Activated CD8-positive, alpha-beta T cell treated with anti-CD3 and anti-CD28 coated beads for 36 hours (primary cell): ENCODE measurements at regions of chr16 and their contacts with region 1.

Region 1: GRCh38 chr16:11255737-11256660 is at the start of gene SOCS1:
- DNase-seq: peak; percentile 87
- ATAC-seq: peak; percentile 65
- H3K4me3 Mint-ChIP-seq: peak within 1 kb of the TSS; percentile 97
- H3K27ac Mint-ChIP-seq: peak within 1 kb of the TSS; percentile 94
- H3K4me1 Mint-ChIP-seq: peaks cover 41% of the 10 kb centered on the region
- H3K27me3 Mint-ChIP-seq: no peaks in the 10 kb centered on the region
- CTCF ChIP-seq: peak; percentile 84
- total RNA-seq, gene SOCS1: 75.7 to 75.8 TPM

Region 2: GRCh38 chr16:10954903-10955302 is 301.1 kb before region 1 on chr16:
- CTCF ChIA-PET with region 1: interaction called, 6 read pairs
- POLR2A ChIA-PET with region 1: interaction called, 20 read pairs
- intact Hi-C with region 1: no loop called
- DNase-seq: no peak
- ATAC-seq: no peak
- H3K4me3 Mint-ChIP-seq: no peak overlapping the region
- H3K27ac Mint-ChIP-seq: peak overlapping the region; percentile 16
- H3K4me1 Mint-ChIP-seq: peaks cover 38% of the 10 kb centered on the region
- H3K27me3 Mint-ChIP-seq: no peaks in the 10 kb centered on the region
- CTCF ChIP-seq: no peak

Region 3: DNA sequence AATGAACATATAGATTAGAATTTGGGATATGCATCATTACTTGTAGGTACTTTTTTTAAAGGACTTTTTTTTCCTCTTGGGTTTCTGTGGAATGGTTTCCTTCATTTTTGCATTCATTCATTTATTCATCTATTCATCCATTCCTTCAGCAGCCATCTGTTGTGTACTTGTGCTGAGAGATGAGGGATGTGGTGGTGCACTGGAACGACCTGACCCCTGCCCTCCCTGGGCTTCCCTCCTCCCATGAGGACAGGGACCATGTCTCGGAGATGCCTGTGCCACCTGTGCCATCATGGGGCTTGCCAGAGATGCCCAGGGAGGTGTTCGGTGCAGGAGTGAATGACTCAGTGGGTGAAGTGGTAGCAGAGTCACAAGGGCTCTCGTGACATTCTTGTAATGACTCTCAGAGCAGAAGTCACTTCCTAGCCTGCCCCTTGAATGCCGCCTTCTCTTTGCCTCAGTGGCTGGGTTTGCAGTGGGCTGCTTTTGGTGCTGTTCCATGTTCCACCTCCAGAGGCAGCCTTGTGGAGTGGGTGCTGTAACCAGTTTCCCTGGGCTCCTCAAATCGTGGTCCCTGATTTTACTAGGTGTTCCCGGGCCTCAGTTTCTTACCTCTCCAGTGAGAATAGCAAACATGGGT is 267.7 kb before region 1 on chr16:
- CTCF ChIA-PET with region 1: interaction called, 10 read pairs
- POLR2A ChIA-PET with region 1: interaction called, 13 read pairs
- intact Hi-C with region 1: no loop called
- DNase-seq: peak; percentile 90
- ATAC-seq: peak; percentile 93
- H3K4me3 Mint-ChIP-seq: peak overlapping the region; percentile 21
- H3K27ac Mint-ChIP-seq: peak overlapping the region; percentile 86
- H3K4me1 Mint-ChIP-seq: peaks cover 64% of the 10 kb centered on the region
- H3K27me3 Mint-ChIP-seq: no peaks in the 10 kb centered on the region
- CTCF ChIP-seq: peak; percentile 72

Region 4: DNA sequence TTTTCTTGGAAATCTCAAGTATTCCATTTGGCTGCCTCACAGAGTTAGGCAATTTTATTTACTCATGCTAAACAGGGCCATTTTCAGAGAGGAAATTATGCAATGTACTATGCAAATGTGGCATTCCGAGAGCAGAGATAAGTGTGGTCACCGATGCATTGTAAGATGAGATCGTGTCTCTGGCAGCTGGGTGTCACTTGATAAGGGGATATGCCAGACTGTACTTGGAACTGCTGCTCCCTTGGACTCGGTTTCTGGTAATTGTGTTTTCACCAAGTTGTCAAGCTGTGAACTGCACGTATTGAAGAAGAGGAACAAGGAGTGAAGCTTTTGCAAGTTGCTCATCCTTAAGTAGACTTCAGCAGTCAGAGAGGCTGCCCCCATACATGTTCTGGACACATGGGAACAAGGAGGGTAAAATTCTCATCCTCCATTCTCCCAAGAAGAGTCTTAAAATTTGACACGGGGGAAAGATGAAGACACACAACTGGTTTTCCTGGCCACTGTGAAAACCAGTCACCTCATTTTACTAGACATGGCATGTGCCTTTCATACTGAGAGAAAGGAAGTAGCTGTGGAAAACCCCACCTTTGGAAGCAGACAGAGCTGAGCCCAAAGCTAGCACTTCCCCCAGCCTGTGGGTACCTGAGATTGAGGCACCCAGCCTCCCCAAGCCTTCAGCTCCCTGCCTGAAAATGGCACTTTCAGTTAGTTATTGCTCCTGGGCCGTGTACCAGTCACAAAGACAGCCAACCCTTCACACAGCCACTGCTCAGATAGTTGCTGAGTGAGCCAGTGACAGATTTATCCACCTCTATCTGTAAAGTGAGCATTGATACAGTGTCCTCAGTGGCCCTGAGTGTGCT is 150.7 kb before region 1 on chr16:
- CTCF ChIA-PET with region 1: interaction called, 9 read pairs
- POLR2A ChIA-PET with region 1: interaction called, 147 read pairs
- intact Hi-C with region 1: no loop called
- DNase-seq: peak; percentile 61
- ATAC-seq: peak; percentile 66
- H3K4me3 Mint-ChIP-seq: peak overlapping the region; percentile 11
- H3K27ac Mint-ChIP-seq: peak overlapping the region; percentile 89
- H3K4me1 Mint-ChIP-seq: peaks cover 61% of the 10 kb centered on the region
- H3K27me3 Mint-ChIP-seq: no peaks in the 10 kb centered on the region
- CTCF ChIP-seq: no peak

Region 5: GRCh38 chr16:11224096-11224893 is 31.7 kb before region 1 on chr16:
- CTCF ChIA-PET with region 1: interaction called, 21 read pairs
- POLR2A ChIA-PET with region 1: interaction called, 146 read pairs
- intact Hi-C with region 1: no loop called
- DNase-seq: peak; percentile 91
- ATAC-seq: peak; percentile 65
- H3K4me3 Mint-ChIP-seq: peak overlapping the region; percentile 63
- H3K27ac Mint-ChIP-seq: peak overlapping the region; percentile 98
- H3K4me1 Mint-ChIP-seq: peaks cover 55% of the 10 kb centered on the region
- H3K27me3 Mint-ChIP-seq: no peaks in the 10 kb centered on the region
- CTCF ChIP-seq: no peak

Region 6: DNA sequence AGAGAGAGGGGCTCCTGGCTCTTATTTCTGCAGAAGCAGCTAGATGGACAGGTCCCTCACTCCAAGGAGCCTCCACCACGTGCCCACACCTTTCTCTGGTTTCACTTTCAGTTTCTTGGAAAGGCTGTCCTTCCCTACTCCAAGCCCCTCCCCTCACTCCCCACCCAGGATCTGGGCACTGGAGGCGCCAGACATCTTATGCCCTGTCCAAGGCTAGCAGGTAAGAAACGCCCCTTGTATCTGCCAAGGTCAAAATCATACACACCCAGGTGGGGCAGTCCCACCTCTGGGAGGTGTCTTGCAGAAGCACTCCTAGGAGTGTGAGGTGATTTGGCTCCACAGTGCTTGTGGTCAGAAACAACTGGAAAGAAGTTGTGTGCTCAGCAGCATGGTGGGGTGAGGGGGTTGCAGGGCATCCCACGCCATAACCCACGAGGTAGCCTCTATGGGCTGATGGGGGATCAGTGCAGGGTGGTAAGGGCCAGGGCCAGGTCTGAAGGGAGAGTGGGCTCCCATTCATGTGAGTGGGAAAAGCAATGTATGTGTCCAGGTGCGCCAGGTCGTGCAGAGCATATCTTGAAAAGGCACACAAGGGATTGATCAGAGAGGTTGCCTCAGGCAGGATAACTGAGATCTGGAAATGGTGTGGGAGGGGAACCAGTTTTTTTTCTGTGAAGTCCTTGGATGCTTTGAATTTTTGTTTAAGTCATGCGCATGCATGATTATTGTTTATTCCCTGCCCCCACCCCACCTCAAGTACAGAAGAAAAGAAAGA is 56.9 kb after region 1 on chr16:
- CTCF ChIA-PET with region 1: no interaction called
- POLR2A ChIA-PET with region 1: interaction called, 19 read pairs
- intact Hi-C with region 1: no loop called
- DNase-seq: peak; percentile 31
- ATAC-seq: peak; percentile 22
- H3K4me3 Mint-ChIP-seq: no peak overlapping the region
- H3K27ac Mint-ChIP-seq: no peak overlapping the region
- H3K4me1 Mint-ChIP-seq: peaks cover 44% of the 10 kb centered on the region
- H3K27me3 Mint-ChIP-seq: no peaks in the 10 kb centered on the region
- CTCF ChIP-seq: no peak

Region 7: DNA sequence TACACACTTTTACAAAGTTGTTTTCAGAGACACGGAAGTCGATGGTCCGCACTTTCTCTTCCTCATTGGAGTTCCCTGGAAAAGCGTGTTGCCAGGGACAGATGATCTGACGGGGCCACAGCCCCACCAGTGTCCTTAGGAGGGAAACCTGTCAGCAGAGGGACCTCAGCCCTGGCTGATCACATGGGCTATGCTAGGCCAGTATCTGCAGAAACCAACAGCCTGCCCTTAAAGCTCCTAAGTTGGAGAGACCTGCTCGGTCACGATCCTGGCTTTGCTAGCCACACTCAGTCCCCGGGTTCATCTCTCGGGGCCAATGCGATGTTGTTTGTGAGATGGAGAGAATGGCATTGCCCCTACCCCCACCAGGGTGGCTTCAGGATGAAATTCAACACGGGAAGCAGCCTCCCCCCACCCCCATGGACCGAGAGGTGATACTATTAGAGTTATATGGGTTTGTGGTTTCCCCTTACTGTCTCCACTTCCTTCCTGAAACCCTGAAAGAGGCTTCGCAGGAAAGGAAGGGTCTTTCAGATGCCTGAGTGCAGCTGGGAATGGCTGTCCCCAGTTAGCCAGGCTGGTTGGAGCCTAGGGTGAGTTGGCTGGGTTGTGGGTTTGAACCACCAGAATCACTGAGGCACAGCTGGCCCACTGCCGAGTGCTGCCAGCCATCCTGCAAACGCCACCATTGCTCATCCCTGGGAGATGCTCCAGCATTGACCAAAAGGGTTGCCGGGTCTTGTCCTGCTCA is 105.9 kb after region 1 on chr16:
- CTCF ChIA-PET with region 1: interaction called, 88 read pairs
- POLR2A ChIA-PET with region 1: interaction called, 19 read pairs
- intact Hi-C with region 1: no loop called
- DNase-seq: peak; percentile 59
- ATAC-seq: peak; percentile 24
- H3K4me3 Mint-ChIP-seq: peak overlapping the region; percentile 34
- H3K27ac Mint-ChIP-seq: no peak overlapping the region
- H3K4me1 Mint-ChIP-seq: peaks cover 46% of the 10 kb centered on the region
- H3K27me3 Mint-ChIP-seq: peaks cover 15% of the 10 kb centered on the region
- CTCF ChIP-seq: no peak

Region 8: DNA sequence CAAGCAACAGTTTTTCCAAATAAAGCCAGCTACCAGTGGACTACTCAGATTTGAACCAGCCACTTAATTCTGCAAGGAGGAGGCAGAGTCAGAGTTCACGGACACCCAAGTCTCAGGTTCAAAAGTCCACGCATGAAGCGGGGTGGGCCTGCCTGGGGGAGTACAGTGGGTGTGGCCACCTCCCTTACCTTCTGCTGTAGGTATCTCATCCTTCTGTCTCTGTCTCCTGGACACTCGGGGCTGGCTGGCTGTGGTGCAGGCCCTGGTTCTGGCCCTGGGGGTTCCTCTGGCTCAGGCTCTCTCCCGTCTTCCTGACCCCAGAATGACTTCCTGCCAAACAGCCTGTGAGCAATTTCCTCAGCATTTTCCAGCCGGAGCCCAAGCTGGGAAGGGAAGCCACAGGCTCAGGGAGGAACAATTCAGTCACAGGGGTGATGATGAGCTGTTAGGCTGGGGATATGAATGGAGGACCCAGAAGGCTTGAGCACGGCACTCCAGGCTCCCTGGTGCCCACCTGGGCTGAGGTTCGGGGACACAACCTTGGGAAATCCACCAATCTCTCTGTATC is 228.8 kb after region 1 on chr16:
- CTCF ChIA-PET with region 1: no interaction called
- POLR2A ChIA-PET with region 1: no interaction called
- intact Hi-C with region 1: no loop called
- DNase-seq: no peak
- ATAC-seq: no peak
- H3K4me3 Mint-ChIP-seq: no peak overlapping the region
- H3K27ac Mint-ChIP-seq: no peak overlapping the region
- H3K4me1 Mint-ChIP-seq: no peaks in the 10 kb centered on the region
- H3K27me3 Mint-ChIP-seq: no peaks in the 10 kb centered on the region
- CTCF ChIP-seq: no peak